Naive thymus-derived CD4-positive, alpha-beta T cell (primary cell): ENCODE measurements at regions of chr3 and their contacts with region 1.

Region 1: GRCh38 chr3:12948891-12949711 is 107.7 kb upstream of the RPL32 start:
- DNase-seq: peak in 1 of 9 donors; percentile 37
- ATAC-seq: peak; percentile 60
- H3K4me3 ChIP-seq: no peak overlapping the region
- H3K4me3 Mint-ChIP-seq: peak overlapping the region in 1 of 10 donors; percentile 35
- H3K27ac ChIP-seq: no peak overlapping the region
- H3K27ac Mint-ChIP-seq: peak overlapping the region in 7 of 9 donors; percentile 6 to 75 (median 42)
- H3K4me1 ChIP-seq: peaks cover 19 to 29% of the 10 kb centered on the region in 2 donors
- H3K4me1 Mint-ChIP-seq: peaks cover 35 to 71% (median 58%) of the 10 kb centered on the region in 7 donors
- H3K27me3 ChIP-seq: no peaks in the 10 kb centered on the region
- H3K27me3 Mint-ChIP-seq: no peaks in the 10 kb centered on the region

Region 2: GRCh38 chr3:12395349-12396012 is 553.6 kb before region 1 on chr3:
- CTCF ChIA-PET with region 1: no interaction called
- POLR2A ChIA-PET with region 1: no interaction called
- intact Hi-C with region 1: no loop called
- DNase-seq: no peak
- ATAC-seq: no peak
- H3K4me3 ChIP-seq: peak overlapping the region; percentile 14
- H3K4me3 Mint-ChIP-seq: peak overlapping the region in 3 of 10 donors; percentile 31 to 67 (median 60)
- H3K27ac ChIP-seq: no peak overlapping the region
- H3K27ac Mint-ChIP-seq: peak overlapping the region in 1 of 9 donors; percentile 50
- H3K4me1 ChIP-seq: no peaks in the 10 kb centered on the region
- H3K4me1 Mint-ChIP-seq: peaks cover 0 to 15% (median 0%) of the 10 kb centered on the region in 7 donors
- H3K27me3 ChIP-seq: no peaks in the 10 kb centered on the region
- H3K27me3 Mint-ChIP-seq: peaks cover 21 to 38% (median 25%) of the 10 kb centered on the region in 5 donors

Region 3: DNA sequence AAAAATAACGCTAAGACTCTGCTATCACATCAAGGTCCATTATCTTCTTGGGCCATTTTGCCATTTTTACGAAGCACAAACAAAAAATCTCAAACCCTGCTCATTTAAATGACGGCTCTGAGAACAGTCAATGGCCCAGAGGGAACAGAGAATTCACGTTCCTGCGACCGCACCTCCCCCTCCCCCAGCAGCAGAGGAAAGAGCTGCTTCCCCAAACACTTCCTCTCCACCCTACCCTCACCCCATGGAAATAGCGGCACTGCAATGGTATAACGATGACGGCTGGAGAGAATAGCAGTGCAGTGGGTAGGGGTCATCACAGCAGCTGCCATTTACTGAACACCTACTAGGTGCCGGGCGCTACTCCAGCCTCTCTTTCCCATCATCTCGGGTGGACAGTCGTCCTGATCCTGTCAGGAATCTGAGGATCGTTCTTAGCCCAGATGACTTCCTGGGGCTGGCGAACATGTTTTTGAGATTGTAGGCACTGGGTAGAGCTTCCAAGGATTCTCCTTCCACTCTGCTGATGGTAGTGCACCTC is 10.8 kb after region 1 on chr3:
- CTCF ChIA-PET with region 1: interaction called, 3 read pairs
- POLR2A ChIA-PET with region 1: interaction called, 13 read pairs
- intact Hi-C with region 1: no loop called
- DNase-seq: peak in 1 of 9 donors; percentile 10
- ATAC-seq: peak; percentile 70
- H3K4me3 ChIP-seq: no peak overlapping the region
- H3K4me3 Mint-ChIP-seq: peak overlapping the region in 9 of 10 donors; percentile 49 to 87 (median 75)
- H3K27ac ChIP-seq: peak overlapping the region; percentile 6
- H3K27ac Mint-ChIP-seq: peak overlapping the region in 6 of 9 donors; percentile 28 to 83 (median 55)
- H3K4me1 ChIP-seq: peaks cover 29 to 67% of the 10 kb centered on the region in 2 donors
- H3K4me1 Mint-ChIP-seq: peaks cover 57 to 99% (median 90%) of the 10 kb centered on the region in 7 donors
- H3K27me3 ChIP-seq: no peaks in the 10 kb centered on the region
- H3K27me3 Mint-ChIP-seq: no peaks in the 10 kb centered on the region